Mammary epithelial cell (primary cell): ENCODE measurements at regions of chr2 and their contacts with region 1.

Region 1: GRCh38 chr2:160406591-160407392 is 86.8 kb downstream of the RBMS1 start:
- DNase-seq: peak; percentile 80
- H3K4me3 ChIP-seq: peak overlapping the region; percentile 76 to 85 (median 84)
- H3K27ac ChIP-seq: peak overlapping the region; percentile 87
- H3K4me1 ChIP-seq: peaks cover 64% of the 10 kb centered on the region
- H3K27me3 ChIP-seq: no peaks in the 10 kb centered on the region
- CTCF ChIP-seq: no peak

Region 2: DNA sequence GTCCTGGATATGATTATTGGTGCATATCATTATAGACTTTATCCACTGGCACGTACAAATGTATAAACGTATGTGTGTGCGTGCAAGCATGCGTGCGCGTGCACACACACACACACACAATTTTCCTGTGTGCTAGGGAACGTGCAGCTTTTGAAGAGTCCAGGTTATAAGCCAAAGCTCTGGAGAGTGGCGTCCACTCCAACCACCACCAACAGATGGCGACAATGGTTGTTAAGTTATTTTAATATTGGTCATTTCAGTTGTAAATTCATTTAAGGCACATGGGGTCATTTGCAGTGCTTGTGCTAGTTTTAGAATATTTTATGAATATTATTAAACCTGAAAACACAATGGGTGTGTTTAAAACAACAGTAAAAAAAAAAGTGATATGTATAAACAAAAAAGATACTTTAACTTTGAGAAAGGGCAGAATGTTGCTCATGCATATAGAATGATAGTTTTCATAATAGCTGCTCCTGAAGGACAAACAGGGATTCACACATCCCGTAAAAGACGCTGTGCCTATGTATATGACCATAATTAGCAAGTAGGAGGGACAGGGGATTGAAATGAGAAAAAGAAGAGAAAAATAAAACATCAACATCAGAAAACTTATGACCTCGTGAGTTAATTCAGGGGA is 82.5 kb before region 1 on chr2:
- CTCF ChIA-PET with region 1: no interaction called
- dilution Hi-C with region 1: no loop called
- in situ Hi-C with region 1: no loop called
- intact Hi-C with region 1: loop called (anchors 2 kb)
- DNase-seq: peak; percentile 32
- H3K4me3 ChIP-seq: no peak overlapping the region
- H3K27ac ChIP-seq: no peak overlapping the region
- H3K4me1 ChIP-seq: no peaks in the 10 kb centered on the region
- H3K27me3 ChIP-seq: no peaks in the 10 kb centered on the region
- CTCF ChIP-seq: peak; percentile 80 to 84

Region 3: GRCh38 chr2:160353166-160353565 is 53.6 kb before region 1 on chr2:
- CTCF ChIA-PET with region 1: no interaction called
- dilution Hi-C with region 1: no loop called
- in situ Hi-C with region 1: no loop called
- intact Hi-C with region 1: loop called (anchors 1 kb)
- DNase-seq: no peak
- H3K4me3 ChIP-seq: no peak overlapping the region
- H3K27ac ChIP-seq: peak overlapping the region; percentile 53
- H3K4me1 ChIP-seq: peaks cover 28% of the 10 kb centered on the region
- H3K27me3 ChIP-seq: no peaks in the 10 kb centered on the region
- CTCF ChIP-seq: peak in 1 of 2 donors; percentile 51

Region 4: DNA sequence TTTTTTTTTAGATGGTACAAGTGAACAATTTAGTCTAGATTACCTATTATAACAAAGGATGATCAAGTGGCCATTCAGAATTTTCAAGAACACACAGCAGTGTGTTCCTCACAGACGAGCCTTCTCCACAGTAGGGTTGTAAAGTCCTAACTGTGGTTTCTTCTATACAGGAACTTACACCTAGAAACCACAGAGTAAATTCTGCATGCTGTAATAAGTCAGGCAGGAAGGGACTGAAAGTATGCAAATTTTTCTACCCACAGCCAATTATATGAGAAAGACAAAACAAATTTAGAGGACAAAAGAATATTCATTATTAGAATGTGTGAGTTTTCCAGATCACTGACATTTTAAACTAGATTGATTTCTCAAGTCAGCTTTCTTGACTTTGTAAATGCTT is 12.6 kb before region 1 on chr2:
- CTCF ChIA-PET with region 1: interaction called, 14 read pairs
- dilution Hi-C with region 1: no loop called
- in situ Hi-C with region 1: no loop called
- intact Hi-C with region 1: no loop called
- DNase-seq: no peak
- H3K4me3 ChIP-seq: no peak overlapping the region
- H3K27ac ChIP-seq: peak overlapping the region; percentile 21
- H3K4me1 ChIP-seq: peaks cover 71% of the 10 kb centered on the region
- H3K27me3 ChIP-seq: no peaks in the 10 kb centered on the region
- CTCF ChIP-seq: no peak